GM13977 (cell line): ENCODE measurements at regions of chr12 and their contacts with region 1.

Region 1: GRCh38 chr12:66087365-66087943 is 43.1 kb downstream of the LLPH start:
- DNase-seq: peak; percentile 56
- CTCF ChIP-seq: peak; percentile 80

Region 2: GRCh38 chr12:64890873-64891468 is 1196.5 kb before region 1 on chr12:
- in situ Hi-C with region 1: loop called (anchors 25 kb)
- DNase-seq: peak; percentile 46
- CTCF ChIP-seq: peak; percentile 64

Region 3: GRCh38 chr12:65585648-65586602 is 501.5 kb before region 1 on chr12:
- in situ Hi-C with region 1: loop called (anchors 25 kb)
- DNase-seq: no peak
- CTCF ChIP-seq: no peak